ENCODE measurements at regions of chr16 and their contacts with region 1.

Region 1: DNA sequence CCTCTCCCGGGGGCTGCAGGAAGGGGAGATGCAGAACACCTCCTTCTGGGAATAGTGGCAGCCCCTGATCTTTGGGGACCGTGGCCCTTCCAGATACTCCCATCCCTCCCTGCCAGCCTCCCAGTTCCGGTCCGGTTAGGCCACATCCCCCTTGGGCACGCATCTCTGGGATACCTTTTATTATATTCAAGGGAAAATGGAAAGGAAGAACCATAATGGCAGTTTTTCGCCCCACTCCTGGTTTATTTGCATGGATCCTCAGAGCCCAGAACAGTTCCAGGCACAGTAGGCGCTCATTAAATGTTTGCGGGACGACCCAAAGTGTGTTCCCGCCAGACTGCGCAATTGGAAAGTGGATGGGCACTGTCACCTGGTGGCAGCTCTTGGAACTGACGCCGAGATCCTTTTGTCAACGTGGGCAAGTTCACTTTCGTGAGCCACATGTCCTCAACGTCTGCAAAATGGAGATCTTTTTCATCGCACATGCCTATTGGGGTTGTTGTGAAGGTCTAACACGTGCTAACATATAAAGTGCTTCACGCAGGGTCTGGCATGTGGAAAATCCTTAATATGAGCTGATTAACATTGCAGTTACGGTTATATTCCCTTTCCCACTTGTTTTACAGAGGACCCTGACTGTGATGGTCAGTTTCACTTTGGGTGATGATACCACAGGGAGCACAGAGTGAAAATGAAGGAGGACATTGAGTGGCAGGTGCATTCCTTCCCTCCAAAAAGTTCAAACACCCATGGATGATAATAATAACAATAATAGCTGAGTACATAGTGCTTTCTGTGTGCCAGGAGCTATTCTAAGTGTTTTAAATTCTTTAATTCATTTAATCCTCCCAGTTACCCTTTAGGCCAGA is 1.7 kb upstream of the GPRC5B start:
- DNase-seq: peak; percentile 76 to 97 (median 90)

Region 2: GRCh38 chr16:19555162-19555937 is 331.0 kb before region 1 on chr16 and contains the start of gene VPS35L:
- intact Hi-C with region 1: loop called (anchors 2 kb)
- DNase-seq: peak; percentile 91 to 99 (median 97)

Region 3: DNA sequence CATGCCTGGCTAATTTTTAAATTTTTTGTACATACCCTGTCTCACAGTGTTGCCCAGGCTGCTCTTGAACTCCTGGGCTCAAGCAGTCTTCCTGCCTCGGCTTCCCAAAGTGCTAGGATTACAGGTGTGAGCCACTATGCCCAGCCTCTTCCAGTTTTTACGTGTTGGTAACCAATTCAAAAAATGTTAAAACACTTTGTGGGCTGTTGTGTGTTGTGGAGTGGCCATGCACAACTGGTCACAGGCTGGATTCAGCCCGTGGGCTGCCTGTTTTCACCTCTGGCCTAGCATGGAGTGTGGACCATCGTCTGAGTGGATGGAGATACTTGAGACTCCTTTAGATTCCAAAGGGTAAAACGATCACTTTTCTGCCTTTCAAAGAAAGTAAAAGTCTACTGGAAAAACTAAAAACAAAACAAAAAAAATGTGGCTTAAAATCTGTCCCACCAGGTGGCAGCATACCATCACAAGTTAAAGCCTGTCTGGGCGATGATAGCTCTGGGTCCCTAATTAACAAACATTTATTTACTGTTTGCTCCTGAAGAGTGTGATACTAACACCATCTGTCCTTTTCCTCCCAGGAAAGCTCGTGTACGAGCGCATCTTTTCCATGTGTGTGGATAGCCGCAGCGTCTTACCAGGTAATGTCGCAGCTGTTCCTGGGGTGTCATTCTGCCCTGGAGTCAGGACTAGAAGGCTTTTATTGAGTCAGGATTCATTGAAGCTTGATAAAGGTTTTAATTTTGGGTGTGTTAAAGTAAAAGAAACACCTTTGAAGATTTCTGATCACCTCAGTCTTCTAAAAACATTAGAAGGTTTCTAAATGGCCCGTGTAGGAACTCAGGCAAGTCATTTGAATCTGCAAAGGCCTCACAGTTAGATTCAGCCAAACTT is 285.0 kb before region 1 on chr16:
- intact Hi-C with region 1: loop called (anchors 1 kb)
- DNase-seq: peak in 33 of 42 donors; percentile 25 to 89 (median 60)

Region 4: DNA sequence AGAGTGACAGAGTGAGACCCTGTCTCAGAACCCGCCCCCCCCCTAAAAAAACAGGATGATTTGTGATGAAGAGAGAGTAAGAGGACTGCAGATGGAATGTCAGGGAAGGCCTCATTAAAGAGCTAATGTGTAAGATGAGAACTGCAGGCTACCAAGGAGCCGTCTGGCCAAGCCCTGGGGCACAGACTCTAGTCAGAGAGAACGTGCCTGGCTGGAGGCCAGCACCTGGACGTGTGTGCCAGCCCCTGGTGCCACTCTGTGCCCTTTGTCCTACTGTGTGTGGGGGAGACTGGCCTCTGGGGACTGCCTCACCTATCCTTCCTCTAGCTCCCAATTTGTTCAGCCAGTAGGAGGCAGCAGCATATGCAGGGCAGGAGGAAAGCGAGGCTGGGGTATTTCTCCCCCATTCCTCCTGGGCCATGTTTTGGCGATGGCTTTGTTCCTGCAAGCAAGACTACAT is 205.4 kb before region 1 on chr16:
- intact Hi-C with region 1: no loop called
- DNase-seq: no peak

Region 5: DNA sequence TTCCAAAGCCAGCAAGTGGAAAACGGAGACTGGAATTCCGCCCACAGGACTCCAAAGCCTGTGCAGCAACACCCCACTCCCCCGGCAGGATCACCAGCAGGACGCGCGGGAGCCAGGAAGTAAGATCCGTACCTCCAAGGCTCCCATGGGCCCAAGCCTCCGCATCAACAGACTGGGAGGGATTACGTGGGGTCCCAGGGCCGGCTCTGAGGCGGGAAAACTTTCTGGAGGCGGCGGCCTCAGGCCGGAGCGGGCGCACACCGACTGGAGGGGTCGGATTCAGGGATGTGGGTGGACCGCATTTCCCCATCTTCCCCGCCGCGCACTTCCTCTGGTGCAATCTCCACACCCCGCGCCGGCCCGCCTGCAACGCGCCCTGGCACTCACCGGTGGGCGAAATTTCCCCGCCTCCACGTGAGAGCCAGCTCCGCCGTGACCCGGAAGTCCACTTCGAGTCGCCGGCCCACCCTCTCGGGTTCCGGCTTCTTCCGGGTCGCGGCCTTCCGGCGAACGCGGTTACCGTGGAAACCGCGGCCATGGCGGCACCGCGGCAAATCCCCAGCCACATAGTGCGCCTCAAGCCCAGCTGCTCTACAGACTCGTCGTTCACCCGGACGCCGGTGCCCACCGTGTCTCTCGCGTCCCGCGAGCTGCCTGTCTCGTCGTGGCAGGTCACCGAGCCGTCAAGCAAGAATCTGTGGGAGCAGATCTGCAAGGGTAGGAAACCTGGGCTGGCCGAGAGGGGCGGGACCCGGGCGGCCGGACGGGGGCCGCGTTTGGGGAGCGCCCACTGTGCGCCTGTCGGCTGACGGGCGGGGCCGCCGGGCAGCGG is 168.3 kb before region 1 on chr16 and contains the starts of genes IQCK and KNOP1:
- intact Hi-C with region 1: loop called (anchors 5 kb)
- DNase-seq: peak; percentile 72 to 95 (median 90)

Region 6: GRCh38 chr16:19844945-19845641 is 41.2 kb before region 1 on chr16:
- intact Hi-C with region 1: no loop called
- DNase-seq: no peak